Right ventricle myocardium superior (tissue), 1 donor: ENCODE measurements at regions of chr14 and their contacts with region 1.

Region 1: DNA sequence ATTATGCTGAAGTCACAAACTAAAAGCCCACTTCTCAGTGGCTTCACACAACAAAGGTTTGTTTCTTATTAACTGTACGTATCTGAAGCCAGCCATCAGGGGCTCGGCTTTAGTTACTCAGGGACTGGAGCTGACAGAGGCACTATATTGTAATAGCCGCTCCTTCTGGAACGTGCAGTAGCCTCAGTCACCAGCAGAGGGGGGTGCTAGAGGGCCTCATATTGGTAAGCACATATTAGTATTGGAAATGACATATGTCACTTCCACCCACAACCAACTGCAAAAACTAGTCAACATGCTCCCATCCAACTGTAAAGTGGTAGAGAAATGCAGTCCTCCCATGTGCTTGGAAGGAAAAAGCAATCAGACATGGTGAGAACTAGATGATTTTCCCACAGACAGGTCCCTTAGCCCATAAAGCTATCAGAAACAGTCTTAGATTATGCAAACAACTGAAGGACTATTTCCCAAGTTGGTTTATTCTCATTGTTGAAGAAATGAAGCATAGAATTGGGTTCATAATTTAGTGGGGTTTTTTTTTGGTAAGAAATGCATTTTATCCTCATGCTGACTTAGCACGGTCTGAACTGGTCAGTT is 183.6 kb upstream of the G2E3 start:
- DNase-seq: peak; percentile 72
- ATAC-seq: peak; percentile 67

Region 2: DNA sequence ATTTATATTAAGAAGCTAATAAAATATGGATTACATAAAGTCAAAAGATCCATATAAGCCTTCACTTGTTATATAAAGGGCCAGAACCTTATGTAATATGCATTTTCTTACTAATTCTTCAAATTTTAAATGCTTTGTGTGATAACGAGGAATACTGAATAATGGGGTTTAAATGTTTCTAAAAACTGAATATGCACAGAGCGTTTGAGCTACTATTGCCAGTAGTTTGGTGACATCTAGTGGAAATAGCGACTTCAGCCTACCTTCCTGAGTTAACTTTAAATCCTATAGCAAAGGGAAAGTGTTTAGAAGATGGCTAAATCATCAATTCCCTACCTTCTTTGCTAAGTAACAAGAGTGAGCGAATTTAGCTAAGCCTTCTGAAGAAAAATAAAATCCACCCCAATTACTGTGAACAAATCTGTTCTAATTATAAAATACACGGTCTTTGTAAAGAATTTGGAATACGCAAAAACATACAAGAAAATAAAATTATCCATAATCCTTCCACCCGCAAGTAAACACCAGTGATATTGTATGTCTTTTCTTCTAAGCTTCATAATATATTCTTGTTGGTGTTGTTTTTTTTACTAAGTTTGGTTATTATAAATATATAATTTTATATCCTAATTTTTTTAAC is 68.1 kb after region 1 on chr14:
- intact Hi-C with region 1: loop called (anchors 10 kb)
- DNase-seq: no peak
- ATAC-seq: no peak

Region 3: GRCh38 chr14:30521899-30522736 is 146.7 kb after region 1 on chr14:
- intact Hi-C with region 1: loop called (anchors 10 kb)
- DNase-seq: no peak
- ATAC-seq: no peak